Endothelial cell of umbilical vein (primary cell): ENCODE measurements at regions of chr9 and their contacts with region 1.

Region 1: DNA sequence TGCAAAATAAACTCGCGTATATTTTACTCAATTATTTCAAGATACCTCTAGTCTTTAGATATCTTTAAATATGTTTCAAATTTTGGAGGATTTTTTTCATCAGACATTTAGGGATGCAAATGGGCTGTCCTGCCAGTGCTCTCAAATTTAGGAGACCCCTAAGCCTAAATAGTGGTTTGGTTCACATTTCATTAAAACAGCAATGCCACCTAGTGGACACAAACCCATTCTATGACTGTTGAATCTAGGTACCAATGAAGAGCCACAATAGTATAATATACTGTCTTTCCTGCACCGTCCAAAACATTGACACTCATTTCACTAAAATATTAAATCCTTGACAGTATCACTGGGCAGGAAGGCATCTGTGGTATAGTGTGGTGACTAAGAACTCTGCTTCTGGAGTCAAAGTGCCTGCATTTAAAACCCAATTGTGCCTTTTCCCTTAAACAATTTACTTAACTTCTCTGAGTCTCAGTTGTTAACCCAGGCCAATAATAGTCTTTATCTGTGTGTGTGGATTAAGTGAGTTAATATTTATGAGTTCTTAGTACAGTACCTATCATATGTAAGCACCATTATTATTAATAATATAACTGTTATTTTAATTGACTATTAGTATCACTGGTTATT is 148.0 kb downstream of the RORB start:
- DNase-seq: peak; percentile 21
- H3K4me3 ChIP-seq: no peak overlapping the region
- H3K27ac ChIP-seq: no peak overlapping the region
- H3K4me1 ChIP-seq: no peaks in the 10 kb centered on the region
- H3K27me3 ChIP-seq: no peaks in the 10 kb centered on the region
- CTCF ChIP-seq: peak; percentile 17 to 52
- POLR2A ChIP-seq: no peak

Region 2: DNA sequence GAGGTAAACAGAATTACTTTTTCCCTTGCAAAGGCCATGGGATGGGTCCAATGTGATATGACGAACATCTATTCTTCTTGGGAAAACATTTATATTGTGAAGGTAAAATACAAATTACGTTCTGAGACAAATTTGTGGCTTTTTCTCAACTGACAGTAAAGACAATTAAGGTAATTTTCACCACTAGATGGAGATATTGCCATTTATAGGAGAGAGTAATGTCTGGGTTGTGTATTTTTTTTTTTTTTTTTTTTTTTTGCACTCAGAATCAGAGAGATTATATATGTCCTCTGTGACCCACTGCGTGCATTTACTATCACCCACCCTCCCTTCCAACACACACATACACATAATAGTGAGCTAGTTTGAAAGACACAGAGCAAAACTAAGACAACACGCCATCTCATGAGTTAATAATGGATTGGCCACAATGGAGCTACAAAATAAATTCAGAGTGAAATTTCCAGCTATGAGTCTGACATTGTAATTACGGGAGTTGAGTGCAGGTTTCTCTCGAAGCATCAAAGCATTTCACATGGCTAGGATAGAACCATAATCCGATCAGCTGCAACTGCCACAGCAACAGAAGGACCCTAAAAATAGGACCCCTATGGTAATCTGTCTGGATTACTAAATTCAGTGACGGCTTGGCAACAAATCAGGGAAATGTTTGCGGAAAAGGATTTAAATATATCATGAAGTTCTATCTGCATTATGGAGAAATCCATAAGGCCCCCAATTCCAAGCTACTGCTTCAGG is 1444.2 kb before region 1 on chr9:
- CTCF ChIA-PET with region 1: interaction called, 33 read pairs
- POLR2A ChIA-PET with region 1: no interaction called
- dilution Hi-C with region 1: no loop called
- intact Hi-C with region 1: loop called (anchors 1 kb)
- DNase-seq: peak; percentile 39
- H3K4me3 ChIP-seq: no peak overlapping the region
- H3K27ac ChIP-seq: no peak overlapping the region
- H3K4me1 ChIP-seq: no peaks in the 10 kb centered on the region
- H3K27me3 ChIP-seq: peaks cover 4 to 10% of the 10 kb centered on the region in 2 experiments
- CTCF ChIP-seq: peak; percentile 37 to 40
- POLR2A ChIP-seq: no peak

Region 3: GRCh38 chr9:73269430-73270101 is 1375.6 kb before region 1 on chr9:
- CTCF ChIA-PET with region 1: interaction called, 10 read pairs
- POLR2A ChIA-PET with region 1: no interaction called
- dilution Hi-C with region 1: no loop called
- intact Hi-C with region 1: loop called (anchors 10 kb)
- DNase-seq: peak; percentile 13
- H3K4me3 ChIP-seq: no peak overlapping the region
- H3K27ac ChIP-seq: no peak overlapping the region
- H3K4me1 ChIP-seq: peaks cover 5% of the 10 kb centered on the region
- H3K27me3 ChIP-seq: peaks cover 0 to 6% of the 10 kb centered on the region in 2 experiments
- CTCF ChIP-seq: peak in 1 of 2 donors; percentile 6
- POLR2A ChIP-seq: no peak

Region 4: DNA sequence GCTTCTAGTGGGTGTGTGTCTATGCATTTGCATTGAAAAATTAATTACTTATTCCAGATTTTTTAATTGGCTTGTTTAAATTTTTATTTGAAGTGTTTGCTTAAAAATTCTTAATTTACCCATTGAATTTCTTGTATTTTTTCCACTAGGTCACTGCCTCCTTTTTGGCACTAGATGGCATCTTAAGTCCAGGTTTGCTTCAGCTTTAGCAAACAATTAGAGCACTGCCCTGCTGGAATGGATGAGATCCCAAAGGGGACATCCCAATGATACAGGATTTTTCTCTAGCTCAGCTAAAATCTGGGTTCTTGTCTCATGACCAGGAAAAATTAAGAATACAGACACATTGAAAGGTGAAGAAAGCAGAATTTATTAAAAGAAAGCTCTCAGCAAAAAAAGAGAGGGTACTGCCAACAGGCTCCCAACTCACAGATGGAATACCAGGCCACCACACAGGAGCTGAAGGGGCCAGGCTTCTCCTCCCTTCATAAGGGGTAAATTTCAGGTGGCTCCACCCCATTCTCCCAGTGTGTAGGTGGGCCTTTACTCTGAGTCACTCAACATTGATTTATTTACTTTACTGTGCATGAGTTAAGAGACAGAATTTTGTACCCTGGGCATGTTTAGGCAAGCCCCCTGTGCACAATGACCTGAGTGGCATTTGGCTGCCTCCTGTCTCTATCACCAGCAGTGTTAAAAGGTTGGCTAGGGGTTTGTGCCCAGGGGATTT is 961.1 kb before region 1 on chr9:
- CTCF ChIA-PET with region 1: interaction called, 4 read pairs
- POLR2A ChIA-PET with region 1: no interaction called
- dilution Hi-C with region 1: no loop called
- intact Hi-C with region 1: loop called (anchors 5 kb)
- DNase-seq: peak; percentile 16
- H3K4me3 ChIP-seq: no peak overlapping the region
- H3K27ac ChIP-seq: no peak overlapping the region
- H3K4me1 ChIP-seq: no peaks in the 10 kb centered on the region
- H3K27me3 ChIP-seq: no peaks in the 10 kb centered on the region
- CTCF ChIP-seq: peak; percentile 13 to 23
- POLR2A ChIP-seq: no peak

Region 5: GRCh38 chr9:74663459-74663858 is 18.3 kb after region 1 on chr9:
- CTCF ChIA-PET with region 1: no interaction called
- POLR2A ChIA-PET with region 1: no interaction called
- dilution Hi-C with region 1: no loop called
- intact Hi-C with region 1: no loop called
- DNase-seq: no peak
- H3K4me3 ChIP-seq: no peak overlapping the region
- H3K27ac ChIP-seq: no peak overlapping the region
- H3K4me1 ChIP-seq: no peaks in the 10 kb centered on the region
- H3K27me3 ChIP-seq: no peaks in the 10 kb centered on the region
- CTCF ChIP-seq: no peak
- POLR2A ChIP-seq: no peak

Region 6: DNA sequence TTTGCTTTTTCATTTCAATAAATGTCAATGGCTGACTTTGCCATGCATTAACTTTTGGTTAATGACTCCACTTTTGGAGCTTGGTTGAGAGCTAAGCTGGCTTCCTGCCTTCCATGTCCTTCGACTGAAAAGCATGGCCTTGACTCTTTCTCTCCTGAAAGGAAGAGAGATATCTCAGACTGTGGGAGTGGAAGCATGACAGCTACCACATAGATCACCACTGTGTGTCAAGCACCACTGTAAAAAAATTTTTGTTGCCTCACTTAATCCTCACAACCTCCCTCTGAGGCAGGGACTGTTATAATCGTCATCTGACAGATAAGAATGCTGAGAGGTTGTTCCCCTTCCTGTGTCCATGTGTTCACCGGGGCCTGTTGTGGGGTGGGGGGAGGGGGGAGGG is 36.8 kb after region 1 on chr9:
- CTCF ChIA-PET with region 1: no interaction called
- POLR2A ChIA-PET with region 1: no interaction called
- dilution Hi-C with region 1: no loop called
- intact Hi-C with region 1: no loop called
- DNase-seq: no peak
- H3K4me3 ChIP-seq: no peak overlapping the region
- H3K27ac ChIP-seq: no peak overlapping the region
- H3K4me1 ChIP-seq: no peaks in the 10 kb centered on the region
- H3K27me3 ChIP-seq: no peaks in the 10 kb centered on the region
- CTCF ChIP-seq: no peak
- POLR2A ChIP-seq: no peak